ENCODE measurements at regions of chr12 and their contacts with region 1.

Region 1: GRCh38 chr12:120292661-120293531 is at the start of gene RNU4-1:
- DNase-seq: peak; percentile 54 to 94 (median 61)
- ATAC-seq: peak; percentile 76
- H3K4me3 ChIP-seq: peak within 1 kb of the TSS; percentile 44
- H3K27ac ChIP-seq: peak within 1 kb of the TSS; percentile 100
- H3K4me1 ChIP-seq: peaks cover 8 to 18% of the 10 kb centered on the region in 2 experiments; a peak in 4 of 5 replicates
- H3K27me3 ChIP-seq: no peaks in the 10 kb centered on the region
- CTCF ChIP-seq: no peak
- EP300 ChIP-seq: peak; percentile 62
- POLR2A ChIP-seq: peak; percentile 100
- RAD21 ChIP-seq: no peak
- polyA plus RNA-seq, gene RNU4-1: not detected

Region 2: GRCh38 chr12:119988782-119989668 is 303.9 kb before region 1 on chr12 and contains the start of gene BICDL1:
- CTCF ChIA-PET with region 1: no interaction called
- POLR2A ChIA-PET with region 1: interaction called, 15 read pairs
- in situ Hi-C with region 1: no loop called
- intact Hi-C with region 1: no loop called
- DNase-seq: peak; percentile 95 to 97 (median 96)
- ATAC-seq: peak; percentile 95
- H3K4me3 ChIP-seq: peak within 1 kb of the TSS; percentile 55
- H3K27ac ChIP-seq: no peak within 1 kb of the TSS
- H3K4me1 ChIP-seq: peaks cover 0 to 20% of the 10 kb centered on the region in 2 experiments; a peak in 2 of 5 replicates
- H3K27me3 ChIP-seq: peaks cover 12 to 17% of the 10 kb centered on the region in 2 experiments
- CTCF ChIP-seq: peak in 2 of 3 experiments; percentile 7 to 33; a peak in 2 of 6 replicates
- EP300 ChIP-seq: no peak
- POLR2A ChIP-seq: no peak
- RAD21 ChIP-seq: no peak
- polyA plus RNA-seq, gene BICDL1: 0.06 to 0.07 TPM

Region 3: GRCh38 chr12:120019938-120020337 is 273.0 kb before region 1 on chr12:
- CTCF ChIA-PET with region 1: no interaction called
- POLR2A ChIA-PET with region 1: no interaction called
- in situ Hi-C with region 1: no loop called
- intact Hi-C with region 1: no loop called
- DNase-seq: no peak
- ATAC-seq: no peak
- H3K4me3 ChIP-seq: no peak overlapping the region
- H3K27ac ChIP-seq: no peak overlapping the region
- H3K4me1 ChIP-seq: no peaks in the 10 kb centered on the region
- H3K27me3 ChIP-seq: peaks cover 9% of the 10 kb centered on the region in 2 experiments; a peak in 3 of 5 replicates
- CTCF ChIP-seq: no peak
- EP300 ChIP-seq: no peak
- POLR2A ChIP-seq: no peak
- RAD21 ChIP-seq: no peak

Region 4: DNA sequence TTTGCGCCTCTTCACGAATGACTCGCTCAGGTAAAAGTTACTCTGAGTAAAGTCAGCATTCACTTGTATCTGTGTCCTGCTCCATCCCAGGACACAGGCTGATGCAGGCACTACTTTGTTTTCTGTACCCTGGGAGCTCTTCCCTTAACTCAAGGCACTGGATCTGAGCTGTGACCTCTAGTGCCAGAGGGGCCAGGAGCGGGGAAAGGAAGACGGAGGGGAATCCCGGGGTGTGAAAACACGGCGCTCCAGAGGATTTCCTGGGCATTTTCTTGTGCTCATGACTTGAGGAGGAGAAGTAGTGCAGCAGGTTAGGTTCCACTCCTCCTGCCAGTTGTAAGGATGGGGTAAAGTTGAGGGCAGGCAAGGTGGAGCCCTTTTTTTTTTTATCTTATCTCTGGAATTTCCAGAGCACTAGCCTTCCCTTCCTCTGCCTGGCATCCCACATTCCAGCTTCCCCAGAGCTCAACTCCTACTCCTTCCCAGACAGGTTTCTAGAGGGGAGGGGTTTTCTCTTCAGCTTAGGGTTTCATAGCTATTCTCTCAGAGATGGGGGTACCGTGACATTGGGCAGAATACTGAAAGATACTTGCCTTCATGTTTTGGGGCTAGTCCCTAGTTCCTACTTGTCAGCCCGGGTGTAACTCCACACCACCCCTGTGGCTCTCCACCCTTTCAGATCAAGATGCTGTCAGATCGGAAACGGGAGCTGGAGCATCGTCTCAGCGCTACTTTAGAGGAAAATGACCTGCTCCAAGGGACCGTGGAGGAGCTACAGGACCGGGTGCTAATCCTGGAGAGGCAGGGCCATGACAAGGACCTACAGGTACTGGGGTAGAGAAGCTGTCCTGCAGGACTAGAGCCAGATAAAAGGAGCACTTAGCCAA is 228.6 kb before region 1 on chr12:
- CTCF ChIA-PET with region 1: no interaction called
- POLR2A ChIA-PET with region 1: no interaction called
- in situ Hi-C with region 1: no loop called
- intact Hi-C with region 1: no loop called
- DNase-seq: no peak
- ATAC-seq: no peak
- H3K4me3 ChIP-seq: no peak overlapping the region
- H3K27ac ChIP-seq: no peak overlapping the region
- H3K4me1 ChIP-seq: no peaks in the 10 kb centered on the region
- H3K27me3 ChIP-seq: peaks cover 43 to 67% of the 10 kb centered on the region in 2 experiments
- CTCF ChIP-seq: no peak
- EP300 ChIP-seq: no peak
- POLR2A ChIP-seq: no peak
- RAD21 ChIP-seq: no peak

Region 5: DNA sequence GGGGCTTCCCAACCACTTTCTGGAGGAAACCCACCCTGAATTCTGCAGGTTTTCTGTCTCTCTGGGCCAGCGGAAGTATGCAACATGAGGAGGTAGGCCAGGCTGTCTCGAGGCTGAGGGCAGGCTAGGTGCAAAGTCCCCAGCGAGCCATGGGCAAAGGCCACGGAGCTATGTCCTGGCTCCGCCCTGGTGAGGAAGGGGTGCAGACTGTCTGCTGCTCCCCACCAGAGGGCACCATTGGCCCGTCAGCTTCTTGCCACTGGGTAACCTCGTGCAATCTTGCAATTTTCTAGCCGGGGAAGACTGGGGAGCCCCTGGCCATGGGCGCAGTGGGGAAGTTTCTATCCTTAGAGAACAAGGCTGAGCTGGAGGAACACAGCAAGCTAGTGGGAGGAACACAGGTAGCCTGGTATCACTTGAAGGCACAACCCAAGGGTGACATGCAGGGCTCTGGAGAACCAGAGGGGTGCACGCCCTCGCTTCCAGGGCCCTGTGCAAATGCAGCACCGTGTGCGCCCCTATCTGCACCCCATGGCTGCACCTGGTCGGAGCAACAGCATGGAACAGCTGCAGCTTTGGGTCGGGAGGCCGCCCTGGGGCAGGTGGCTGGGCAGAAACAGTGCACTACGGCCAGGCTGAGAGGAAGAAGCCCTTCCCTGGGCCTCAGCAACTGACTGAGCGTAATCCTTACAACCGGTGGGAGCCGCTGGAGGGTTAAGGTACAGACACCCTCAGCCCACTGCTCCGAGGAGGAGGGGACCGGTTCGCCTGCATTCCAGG is 64.4 kb before region 1 on chr12:
- CTCF ChIA-PET with region 1: no interaction called
- POLR2A ChIA-PET with region 1: interaction called, 420 read pairs
- in situ Hi-C with region 1: no loop called
- intact Hi-C with region 1: loop called (anchors 1 kb)
- DNase-seq: peak; percentile 86 to 92 (median 86)
- ATAC-seq: peak; percentile 78
- H3K4me3 ChIP-seq: peak overlapping the region; percentile 2; the same call in 1 of the 2 replicates
- H3K27ac ChIP-seq: peak overlapping the region; percentile 96; the same call in 2 of the 3 replicates
- H3K4me1 ChIP-seq: peaks cover 74 to 80% of the 10 kb centered on the region in 2 experiments
- H3K27me3 ChIP-seq: no peaks in the 10 kb centered on the region
- CTCF ChIP-seq: peak; percentile 95 to 96 (median 95)
- EP300 ChIP-seq: peak; percentile 38
- POLR2A ChIP-seq: no peak
- RAD21 ChIP-seq: peak; percentile 98 to 99

Region 6: DNA sequence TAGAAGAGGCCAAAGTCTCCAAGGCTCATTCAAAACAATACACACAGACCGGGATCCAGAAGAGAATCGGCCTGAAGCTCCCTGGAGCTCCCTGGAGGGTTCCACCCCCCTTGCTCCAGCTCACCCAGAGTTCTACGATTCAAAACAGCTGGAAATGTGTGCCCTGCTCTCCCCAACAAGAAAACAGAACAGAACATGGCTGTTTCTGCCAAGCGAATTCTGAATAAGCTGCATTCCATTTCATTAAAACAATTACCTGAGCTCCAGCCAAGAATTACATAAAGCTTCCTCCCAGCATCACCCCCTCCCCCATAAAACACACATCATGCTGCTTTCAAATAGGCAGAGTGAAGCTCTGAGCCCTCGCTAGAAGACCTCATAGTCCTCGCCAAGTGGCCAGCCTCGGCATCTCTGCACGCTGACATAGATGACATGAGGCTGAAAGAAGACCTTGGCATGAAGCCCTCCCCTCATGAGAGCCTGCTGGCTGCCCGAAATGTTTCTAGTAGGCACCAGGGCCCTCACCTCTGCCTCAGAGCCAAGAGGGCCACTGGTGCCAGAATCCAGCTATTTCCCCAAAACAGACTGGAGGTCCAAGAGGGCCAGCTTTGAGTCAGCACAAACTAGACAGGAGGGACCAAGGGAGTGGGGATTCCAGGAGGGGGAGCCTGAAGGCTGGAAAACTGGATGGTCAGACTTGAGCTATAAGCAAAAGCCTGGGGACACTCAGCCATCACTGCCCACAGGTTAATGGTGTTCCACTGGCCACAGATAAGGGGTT is 35.7 kb before region 1 on chr12:
- CTCF ChIA-PET with region 1: no interaction called
- POLR2A ChIA-PET with region 1: interaction called, 110 read pairs
- in situ Hi-C with region 1: no loop called
- intact Hi-C with region 1: no loop called
- DNase-seq: no peak
- ATAC-seq: no peak
- H3K4me3 ChIP-seq: no peak overlapping the region
- H3K27ac ChIP-seq: no peak overlapping the region
- H3K4me1 ChIP-seq: peaks cover 7 to 12% of the 10 kb centered on the region in 2 experiments; a peak in 3 of 5 replicates
- H3K27me3 ChIP-seq: no peaks in the 10 kb centered on the region
- CTCF ChIP-seq: no peak
- EP300 ChIP-seq: no peak
- POLR2A ChIP-seq: no peak
- RAD21 ChIP-seq: no peak

Region 7: GRCh38 chr12:120327593-120327992 is 34.7 kb after region 1 on chr12 and contains the start of gene PLA2G1B:
- CTCF ChIA-PET with region 1: no interaction called
- POLR2A ChIA-PET with region 1: interaction called, 16 read pairs
- in situ Hi-C with region 1: no loop called
- intact Hi-C with region 1: no loop called
- DNase-seq: no peak
- ATAC-seq: no peak
- H3K4me3 ChIP-seq: no peak within 1 kb of the TSS
- H3K27ac ChIP-seq: no peak within 1 kb of the TSS
- H3K4me1 ChIP-seq: peaks cover 0 to 5% of the 10 kb centered on the region in 2 experiments; a peak in 3 of 5 replicates
- H3K27me3 ChIP-seq: peaks cover 19 to 20% of the 10 kb centered on the region in 2 experiments; a peak in 3 of 5 replicates
- CTCF ChIP-seq: no peak
- EP300 ChIP-seq: no peak
- POLR2A ChIP-seq: no peak
- RAD21 ChIP-seq: no peak
- polyA plus RNA-seq, gene PLA2G1B: not detected

Region 8: GRCh38 chr12:120445911-120446843 is 153.3 kb after region 1 on chr12 and contains the starts of genes GATC and TRIAP1:
- CTCF ChIA-PET with region 1: no interaction called
- POLR2A ChIA-PET with region 1: interaction called, 17 read pairs
- in situ Hi-C with region 1: no loop called
- intact Hi-C with region 1: no loop called
- DNase-seq: peak; percentile 85 to 95 (median 86)
- ATAC-seq: peak; percentile 93
- H3K4me3 ChIP-seq: peak within 1 kb of the TSS; percentile 99
- H3K27ac ChIP-seq: peak within 1 kb of the TSS; percentile 89
- H3K4me1 ChIP-seq: peaks cover 2 to 8% of the 10 kb centered on the region in 2 experiments; a peak in 3 of 5 replicates
- H3K27me3 ChIP-seq: no peaks in the 10 kb centered on the region; a peak in 1 of 5 replicates
- CTCF ChIP-seq: no peak
- EP300 ChIP-seq: no peak; the same call in 1 of the 2 replicates
- POLR2A ChIP-seq: peak; percentile 94
- RAD21 ChIP-seq: 0 out of 4 replicates have a peak, but pooled peaks of 1 of the 2 experiments have one; percentile 5
- polyA plus RNA-seq, gene GATC: 5.8 to 14.3 TPM
- polyA plus RNA-seq, gene TRIAP1: 354 TPM

Measured in K562 (cell line).